Astrocyte of the cerebellum (primary cell): ENCODE measurements at regions of chr1 and their contacts with region 1.

Region 1: GRCh38 chr1:21141030-21141429 is 35.7 kb downstream of the EIF4G3 start:
- DNase-seq: no peak
- H3K4me3 ChIP-seq: no peak overlapping the region
- CTCF ChIP-seq: no peak

Region 2: DNA sequence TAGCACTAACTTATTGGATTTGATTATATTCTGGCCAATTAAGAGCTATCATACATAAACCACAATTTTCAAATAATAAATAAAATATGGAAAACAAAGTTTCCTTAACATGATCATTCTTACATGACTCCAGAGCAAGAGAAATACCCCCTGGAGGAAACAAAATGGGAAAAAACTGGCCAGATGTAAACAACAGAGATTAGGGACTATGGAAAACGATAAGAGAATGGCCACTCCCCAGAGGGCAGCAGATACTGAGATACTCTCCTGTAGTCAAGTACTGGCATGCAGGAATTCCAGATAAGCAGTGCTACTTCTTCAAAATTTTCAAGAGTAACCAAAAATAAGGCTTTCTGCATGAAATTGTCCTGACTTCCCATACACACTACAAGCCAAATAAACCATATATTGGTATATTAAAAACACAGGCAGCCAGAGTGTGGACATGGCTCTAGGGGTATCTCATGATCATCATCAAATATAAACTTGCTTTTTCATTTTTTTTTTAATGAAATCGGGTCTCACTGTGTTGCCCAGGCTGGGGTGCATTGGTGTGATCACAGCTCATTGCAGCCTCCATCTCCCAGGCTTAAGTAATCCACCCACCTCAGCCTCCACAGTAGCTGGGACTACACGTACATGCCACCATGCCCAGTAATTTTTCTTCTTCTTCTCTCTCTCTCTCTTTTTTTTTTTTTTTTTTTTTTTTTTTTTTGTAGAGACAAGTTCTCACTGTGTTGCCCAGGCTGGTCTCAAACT is 82.8 kb before region 1 on chr1:
- in situ Hi-C with region 1: loop called (anchors 5 kb)
- DNase-seq: no peak
- H3K4me3 ChIP-seq: no peak overlapping the region
- CTCF ChIP-seq: no peak

Region 3: DNA sequence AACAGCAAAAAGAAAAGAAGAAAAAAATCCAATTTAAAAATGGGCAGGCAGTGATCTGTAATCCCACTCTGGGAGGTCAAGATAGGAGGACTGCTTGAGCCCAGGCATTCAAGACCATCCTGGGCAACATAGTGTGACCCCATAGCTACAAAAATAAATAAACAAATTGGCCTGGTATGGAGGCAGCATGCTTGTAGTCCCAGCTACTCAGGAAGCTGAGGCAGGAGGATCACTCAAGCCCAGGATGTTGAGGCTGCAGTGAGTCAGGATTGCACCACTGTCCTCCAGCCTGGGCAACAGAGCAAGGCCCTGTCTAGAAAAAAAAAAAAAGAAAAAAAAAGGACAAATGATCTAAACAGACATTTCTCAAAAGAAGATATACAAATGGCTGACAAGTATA is 63.9 kb before region 1 on chr1:
- in situ Hi-C with region 1: no loop called
- DNase-seq: no peak
- H3K4me3 ChIP-seq: no peak overlapping the region
- CTCF ChIP-seq: no peak